Activated T-helper 2 cell treated with anti-CD3 and anti-CD28 coated beads, Interferon-gamma antibody, Interleukin-2, Interleukin-4, amounts not matched to agents 10 μg/mL and 5 μg/mL and 100 μg/mL, durations not matched to agents 14 hours and 24 hours and 36 hours (primary cell): ENCODE measurements at regions of chr12 and their contacts with region 1.

Region 1: DNA sequence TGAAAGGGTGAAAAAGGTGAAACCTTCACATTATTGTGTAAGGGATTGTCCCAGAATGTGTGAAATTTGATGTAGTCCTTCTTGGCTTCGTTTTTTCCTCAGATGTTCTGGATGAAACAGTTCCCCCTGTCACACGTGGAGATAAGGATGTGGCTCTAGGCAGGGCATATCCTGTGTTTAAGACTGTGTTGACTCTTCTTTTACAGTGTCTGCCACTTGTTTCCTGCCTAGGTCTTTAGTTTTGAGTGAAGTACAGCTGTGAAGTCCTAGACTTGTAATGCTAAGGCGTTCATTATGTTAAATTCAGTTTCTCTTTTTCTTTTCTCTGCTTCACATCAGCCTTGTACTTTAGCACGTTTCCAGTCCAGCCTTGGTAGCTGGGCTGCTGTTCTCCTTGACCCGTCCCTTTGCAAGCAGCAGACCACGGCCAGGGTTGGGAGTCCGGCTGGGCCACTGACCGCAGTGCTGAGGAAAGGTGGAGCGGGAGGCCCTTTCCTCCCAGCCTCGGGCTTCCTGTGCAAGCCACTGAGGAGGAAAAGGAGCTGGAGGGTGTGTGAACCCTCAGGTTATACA is 59.1 kb downstream of the RASSF3 start:
- DNase-seq: peak; percentile 43
- H3K4me3 Mint-ChIP-seq: peak overlapping the region; percentile 87
- H3K27ac Mint-ChIP-seq: peak overlapping the region; percentile 97
- H3K4me1 Mint-ChIP-seq: peaks cover 87% of the 10 kb centered on the region
- H3K27me3 Mint-ChIP-seq: no peaks in the 10 kb centered on the region

Region 2: GRCh38 chr12:64293654-64294364 is 375.5 kb before region 1 on chr12:
- intact Hi-C with region 1: no loop called
- DNase-seq: no peak
- H3K4me3 Mint-ChIP-seq: no peak overlapping the region
- H3K27ac Mint-ChIP-seq: no peak overlapping the region
- H3K4me1 Mint-ChIP-seq: peaks cover 4% of the 10 kb centered on the region
- H3K27me3 Mint-ChIP-seq: peaks cover 14% of the 10 kb centered on the region

Region 3: DNA sequence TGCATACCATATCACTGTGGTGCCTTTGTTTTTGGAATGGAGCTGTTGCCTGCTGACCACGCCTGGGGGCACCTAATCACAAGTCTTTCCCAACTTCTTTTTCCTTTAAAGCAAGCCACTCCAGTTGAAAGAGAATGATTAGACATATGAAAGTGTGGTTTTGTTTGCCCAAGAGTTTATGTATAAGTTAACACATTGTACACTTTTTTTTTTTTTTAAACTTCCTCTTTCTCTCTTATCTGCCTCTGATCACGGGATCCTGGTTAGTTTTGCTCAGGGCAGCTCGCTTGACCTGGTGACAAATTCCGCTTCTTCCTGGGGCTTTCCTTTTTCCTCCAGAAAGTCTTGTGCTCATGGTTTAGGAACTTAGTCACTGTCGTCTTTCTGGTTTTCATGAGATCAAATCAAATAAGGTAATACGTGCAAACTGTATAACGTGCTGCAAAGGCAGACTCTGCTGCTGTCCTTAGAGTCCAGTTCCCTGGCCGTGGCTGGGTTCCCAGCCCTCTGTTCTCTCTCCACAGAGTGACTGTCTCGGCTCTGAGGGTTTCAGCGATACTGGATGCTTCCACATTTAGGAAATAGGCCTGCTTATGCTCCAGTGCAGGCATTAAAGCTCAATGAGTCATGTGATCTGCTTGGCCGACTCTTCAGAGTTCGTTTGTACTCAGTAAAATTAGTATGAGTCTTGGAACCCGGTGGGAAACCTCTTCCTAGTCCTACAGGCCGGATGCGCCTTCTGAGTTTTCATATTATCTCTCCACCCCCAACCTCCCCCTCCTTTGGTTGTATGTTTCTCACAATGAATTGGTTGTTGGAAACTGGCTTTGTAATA is 43.9 kb before region 1 on chr12:
- intact Hi-C with region 1: loop called (anchors 5 kb)
- DNase-seq: no peak
- H3K4me3 Mint-ChIP-seq: peak overlapping the region; percentile 73
- H3K27ac Mint-ChIP-seq: peak overlapping the region; percentile 83
- H3K4me1 Mint-ChIP-seq: peaks cover 25% of the 10 kb centered on the region
- H3K27me3 Mint-ChIP-seq: no peaks in the 10 kb centered on the region